ENCODE measurements at regions of chr1 and their contacts with region 1.

Region 1: DNA sequence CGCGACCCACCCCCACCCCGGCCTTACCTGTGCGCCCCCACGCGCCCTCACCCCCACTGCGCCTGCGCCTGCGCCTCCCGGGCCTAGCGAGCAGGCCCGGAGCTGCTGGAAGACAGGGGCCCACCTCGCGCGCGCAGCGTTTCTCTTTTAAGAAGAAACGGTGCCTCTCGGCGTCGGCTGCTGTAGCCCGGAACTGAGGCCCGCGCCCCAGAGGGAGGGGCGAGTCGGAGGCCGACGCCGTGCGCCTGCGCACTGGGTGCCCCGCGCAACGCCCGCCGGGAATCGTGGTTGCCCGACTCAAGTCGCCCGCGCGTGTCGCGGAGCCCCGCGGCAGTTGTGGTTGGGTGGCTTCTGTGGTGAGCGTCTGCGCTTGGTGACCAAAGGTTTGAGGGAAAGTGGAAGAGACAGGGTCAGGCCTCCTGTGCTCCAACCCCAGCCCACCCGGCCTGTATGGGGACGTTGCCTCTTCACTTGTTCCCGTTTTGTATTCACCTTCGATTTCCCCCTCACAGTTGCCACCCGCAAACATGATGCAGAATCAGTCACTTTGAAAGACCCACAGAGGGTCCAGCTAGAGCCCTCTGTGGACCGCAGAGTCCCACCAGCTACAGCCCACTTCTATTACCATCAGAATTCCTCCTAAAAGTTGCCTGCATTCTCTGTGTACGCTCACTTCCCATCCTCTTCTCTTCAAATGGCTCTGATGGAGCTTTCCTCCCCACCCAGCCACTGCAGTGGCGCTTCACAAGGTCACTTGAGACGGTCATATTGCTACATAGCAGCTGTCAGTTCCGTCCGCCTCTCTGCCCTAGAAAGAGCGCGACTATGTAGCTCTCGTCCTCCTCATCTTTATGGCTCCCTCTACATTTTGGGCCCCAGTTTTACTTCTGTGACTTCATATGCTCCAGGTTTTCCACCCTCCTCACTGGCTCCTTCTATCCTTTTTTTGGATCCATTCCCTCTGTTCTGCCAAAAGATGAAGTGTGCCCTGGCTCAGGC is at the start of gene ZNF692:
- DNase-seq: peak; percentile 99
- total RNA-seq, gene ZNF692: 18.1 TPM

Region 2: GRCh38 chr1:248825909-248826760 is 33.1 kb before region 1 on chr1 and contains the start of gene SH3BP5L:
- intact Hi-C with region 1: loop called (anchors 1 kb)
- DNase-seq: peak; percentile 96
- total RNA-seq, gene SH3BP5L: 25.1 TPM

Region 3: DNA sequence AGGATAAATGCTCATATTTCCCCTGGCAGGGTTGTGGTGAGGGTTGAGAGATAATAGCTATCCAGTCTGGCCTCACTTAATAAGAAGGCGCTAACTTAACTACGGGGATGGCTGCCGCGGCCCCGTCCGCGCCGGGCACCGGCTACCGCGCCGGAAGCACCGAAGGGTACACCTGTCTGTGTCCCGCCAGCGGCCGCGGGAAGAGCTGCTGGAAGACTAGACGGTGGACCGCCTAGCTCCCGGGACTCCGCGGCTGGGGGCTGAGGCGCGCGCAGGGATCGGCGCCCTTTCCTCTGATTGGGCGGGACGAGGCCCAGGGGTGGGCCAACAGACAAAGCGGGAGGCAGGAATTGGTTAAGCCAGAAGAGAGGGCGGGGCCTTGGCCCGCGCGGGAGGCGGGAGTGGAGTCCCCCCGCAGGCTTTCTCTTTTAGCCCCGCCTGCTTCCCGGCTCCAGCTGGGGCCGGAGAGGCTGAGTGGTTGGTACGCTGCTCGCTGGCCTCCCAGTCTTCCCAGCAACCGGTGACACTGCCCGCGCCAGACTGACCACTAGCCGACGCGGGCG is 21.3 kb before region 1 on chr1 and contains the start of gene ZNF672:
- intact Hi-C with region 1: loop called (anchors 1 kb)
- DNase-seq: peak; percentile 99
- total RNA-seq, gene ZNF672: 40.7 TPM

Region 4: GRCh38 chr1:248873409-248873992 is 14.3 kb after region 1 on chr1:
- intact Hi-C with region 1: loop called (anchors 1 kb)
- DNase-seq: peak; percentile 96

Region 5: DNA sequence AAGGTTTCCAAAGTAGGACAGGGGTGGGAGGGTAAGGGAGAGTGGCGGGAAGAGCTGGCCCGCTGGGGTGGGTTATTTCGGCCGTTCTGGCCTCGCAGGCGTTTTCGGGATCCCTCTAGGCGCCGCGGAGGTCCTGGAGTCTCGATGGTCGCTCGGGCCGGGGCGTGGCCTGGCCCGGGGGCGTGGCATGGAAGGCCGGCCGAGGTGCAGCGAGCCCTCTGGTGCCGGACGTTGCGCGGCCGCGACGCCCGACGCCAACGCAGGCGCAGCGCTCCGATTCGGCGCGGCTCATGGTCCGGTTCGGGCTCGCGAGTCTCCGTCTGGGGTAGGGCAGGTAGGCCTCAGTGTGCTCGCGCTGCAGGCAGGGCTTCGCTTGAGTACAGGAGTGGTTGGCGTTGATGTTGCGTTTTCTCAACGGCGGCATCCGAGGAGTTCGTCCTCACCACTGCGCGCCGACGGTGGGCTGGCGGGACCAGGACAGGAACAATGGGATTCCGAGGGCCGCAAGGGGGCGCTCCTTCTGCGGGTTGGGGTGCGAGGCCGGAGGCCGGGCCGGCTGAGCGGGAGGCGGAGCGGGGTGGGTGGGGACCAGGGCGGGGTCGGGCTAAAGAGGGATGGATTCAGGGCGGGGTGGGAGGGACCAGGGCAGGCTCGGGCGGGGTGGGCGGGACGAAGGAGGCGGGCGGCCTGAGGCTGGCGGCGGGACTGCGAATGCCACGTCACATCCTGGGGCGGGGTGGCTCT is 47.0 kb after region 1 on chr1 and contains the start of gene PGBD2:
- intact Hi-C with region 1: loop called (anchors 1 kb)
- DNase-seq: peak; percentile 98
- total RNA-seq, gene PGBD2: 2.9 TPM